ENCODE measurements at regions of chr19 and their contacts with region 1.

Region 1: DNA sequence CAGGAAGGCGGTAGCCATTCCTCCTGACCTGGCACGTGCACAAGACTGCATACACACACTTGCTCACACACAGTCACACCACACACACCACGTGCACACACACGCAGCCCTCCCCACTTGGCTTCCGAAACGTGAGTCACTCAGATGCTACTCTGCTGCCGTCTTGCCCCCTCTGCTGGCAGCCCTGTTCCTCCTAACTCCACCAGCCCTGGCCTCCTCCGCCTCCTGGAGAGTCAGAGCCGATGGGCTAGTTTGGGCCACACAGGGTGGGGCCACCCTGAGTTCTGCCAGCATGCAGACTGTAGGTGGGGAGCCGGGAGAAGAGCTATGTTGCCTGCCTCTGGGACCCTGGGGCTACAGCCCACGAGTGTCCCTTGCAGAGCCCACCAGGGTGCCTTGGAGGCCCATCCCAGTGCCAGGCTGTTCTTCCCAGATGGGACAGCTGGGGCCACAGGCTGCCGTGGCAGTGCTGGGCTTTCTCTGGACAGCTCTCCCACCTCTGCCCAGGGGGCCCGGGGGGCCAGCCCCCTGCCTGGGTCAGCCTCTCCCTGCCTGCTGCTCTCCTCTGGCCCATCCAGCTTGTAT is 12.1 kb downstream of the PIN1 start:
- DNase-seq: peak in 8 of 10 donors; percentile 50 to 96 (median 79)

Region 2: GRCh38 chr19:9914315-9915207 is 67.4 kb after region 1 on chr19:
- intact Hi-C with region 1: loop called (anchors 10 kb)
- DNase-seq: peak; percentile 40 to 94 (median 66)